Spleen (tissue), 13 donors: ENCODE measurements at regions of chr1 and their contacts with region 1.

Region 1: DNA sequence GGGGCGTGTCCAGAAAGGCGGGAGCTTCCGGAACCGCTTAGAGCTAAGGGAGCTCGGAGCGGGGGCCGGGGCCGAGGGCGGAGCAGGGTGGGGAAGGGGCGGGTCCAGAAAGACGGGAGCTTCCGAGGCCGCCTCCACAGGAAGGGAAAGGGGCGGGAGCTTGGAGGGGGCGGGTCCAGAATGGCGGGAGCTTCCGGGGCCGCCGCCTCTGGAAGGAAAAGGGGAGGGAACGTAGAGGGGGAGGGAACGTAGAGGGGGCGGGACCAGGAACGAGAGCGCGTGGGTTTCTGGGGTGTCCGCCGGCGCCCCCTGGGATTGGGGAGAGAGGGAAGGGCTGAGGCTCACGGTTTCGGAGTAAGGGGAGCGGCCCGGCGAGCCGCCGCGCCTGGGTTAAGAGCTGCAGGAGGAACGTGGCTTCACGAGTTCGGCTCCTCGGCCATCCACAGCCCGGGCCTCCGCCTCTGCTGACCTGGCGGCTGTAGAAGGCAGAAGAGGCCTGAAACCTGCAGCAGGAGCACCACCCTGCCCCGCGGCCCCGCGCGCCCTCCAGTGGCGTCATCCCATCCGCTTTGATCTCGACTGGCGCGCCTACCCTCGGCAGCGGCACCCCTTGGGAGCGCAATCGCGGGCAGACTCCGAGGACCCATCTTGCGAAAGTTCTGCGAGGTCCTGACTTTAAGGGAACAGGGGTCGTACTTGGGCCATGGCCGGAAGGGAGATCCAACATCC is 22.9 kb upstream of the HPDL start:
- DNase-seq: peak; percentile 100
- H3K4me3 ChIP-seq: peak overlapping the region; percentile 63 to 91 (median 80)
- H3K27ac ChIP-seq: peak overlapping the region; percentile 89 to 95 (median 94)
- H3K4me1 ChIP-seq: peaks cover 8 to 45% (median 23%) of the 10 kb centered on the region in 6 donors
- H3K27me3 ChIP-seq: no peaks in the 10 kb centered on the region
- CTCF ChIP-seq: peak; percentile 43 to 76 (median 71)
- POLR2A ChIP-seq: peak in 1 of 3 donors; percentile 24

Region 2: GRCh38 chr1:44775078-44775929 is 528.4 kb before region 1 on chr1 and contains the start of gene RPS8:
- intact Hi-C with region 1: no loop called
- DNase-seq: peak; percentile 96
- H3K4me3 ChIP-seq: peak within 1 kb of the TSS; percentile 73 to 93 (median 84)
- H3K27ac ChIP-seq: peak within 1 kb of the TSS; percentile 95 to 98 (median 98)
- H3K4me1 ChIP-seq: peaks cover 15 to 52% (median 36%) of the 10 kb centered on the region in 6 donors
- H3K27me3 ChIP-seq: no peaks in the 10 kb centered on the region
- CTCF ChIP-seq: peak in 1 of 11 experiments; percentile 13
- POLR2A ChIP-seq: peak; percentile 66 to 89 (median 73)
- total RNA-seq, gene RPS8: 1,626 to 2,405 (median 2,159) TPM

Region 3: DNA sequence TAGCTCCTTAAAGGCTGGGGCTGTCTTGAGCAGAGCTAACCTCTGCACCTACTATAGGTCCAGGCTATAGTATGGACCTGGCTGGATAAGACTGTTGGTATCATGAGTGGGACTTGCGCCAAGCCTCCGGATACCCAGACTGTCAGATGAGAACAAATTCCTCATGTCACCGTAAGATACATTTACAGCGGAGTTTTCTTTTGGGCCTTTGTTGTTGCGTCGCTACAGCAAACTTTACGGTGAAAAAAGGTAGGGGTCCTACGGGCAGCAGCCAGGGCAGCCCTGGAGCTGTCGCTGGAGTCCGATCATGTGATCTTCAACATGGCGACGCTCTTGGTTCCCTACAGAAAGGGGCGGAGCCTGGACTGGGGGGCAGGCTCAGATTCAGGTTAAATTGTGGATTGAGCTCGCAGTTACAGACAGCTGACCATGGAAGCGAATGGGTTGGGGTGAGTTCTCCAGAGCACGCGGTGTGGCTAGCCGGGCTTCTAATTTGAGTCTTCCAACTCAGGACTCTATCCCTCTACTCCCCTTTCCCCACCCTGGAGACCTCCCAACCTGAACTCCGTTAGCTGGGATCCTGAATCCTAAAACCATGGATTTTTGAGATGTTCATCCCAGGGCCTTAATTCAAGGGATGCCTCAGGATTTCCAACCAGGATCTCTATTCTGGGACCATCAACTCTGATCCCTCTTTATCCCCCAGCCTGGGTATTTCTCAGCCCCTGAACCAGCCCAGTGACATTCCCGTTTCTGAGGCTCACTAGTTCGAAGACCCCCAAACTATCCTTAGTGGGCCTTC is 291.7 kb before region 1 on chr1 and contains the start of gene UROD:
- intact Hi-C with region 1: loop called (anchors 2 kb)
- DNase-seq: peak; percentile 95
- H3K4me3 ChIP-seq: peak within 1 kb of the TSS; percentile 90 to 100 (median 100)
- H3K27ac ChIP-seq: peak within 1 kb of the TSS; percentile 67 to 92 (median 86)
- H3K4me1 ChIP-seq: peaks cover 30 to 63% (median 55%) of the 10 kb centered on the region in 6 donors
- H3K27me3 ChIP-seq: no peaks in the 10 kb centered on the region
- CTCF ChIP-seq: peak in 3 of 11 experiments; percentile 9 to 46 (median 28)
- POLR2A ChIP-seq: no peak
- total RNA-seq, gene UROD: 41.5 to 70.4 (median 65.4) TPM

Region 4: GRCh38 chr1:45258059-45258650 is 45.6 kb before region 1 on chr1:
- intact Hi-C with region 1: no loop called
- DNase-seq: no peak
- H3K4me3 ChIP-seq: no peak overlapping the region
- H3K27ac ChIP-seq: no peak overlapping the region
- H3K4me1 ChIP-seq: no peaks in the 10 kb centered on the region
- H3K27me3 ChIP-seq: no peaks in the 10 kb centered on the region
- CTCF ChIP-seq: no peak
- POLR2A ChIP-seq: no peak